Caco-2 (cell line): ENCODE measurements at regions of chr5 and their contacts with region 1.

Region 1: DNA sequence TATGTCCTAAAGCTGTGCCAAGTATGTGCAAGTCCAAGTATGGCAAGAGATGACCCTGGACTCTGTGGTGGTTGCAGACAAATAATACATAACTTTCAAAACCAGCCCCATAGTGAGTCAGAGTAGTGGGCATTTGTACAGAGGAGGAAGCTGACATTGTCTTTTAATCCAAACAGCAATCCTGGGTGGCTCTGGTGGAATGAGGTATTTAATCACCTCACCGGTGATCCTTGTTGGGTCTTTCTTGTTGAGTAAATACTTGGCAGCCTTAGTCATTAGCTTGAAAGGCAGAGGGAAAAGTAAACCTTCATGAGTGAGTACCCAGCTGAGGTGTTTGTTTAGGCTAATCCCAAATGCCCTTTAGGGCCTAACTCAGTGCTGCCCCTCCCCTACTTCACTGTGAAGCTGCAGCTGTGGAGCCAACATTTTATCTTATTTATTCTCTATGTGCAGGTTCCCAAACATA is 148.7 kb upstream of the SLC12A2 start:
- DNase-seq: peak; percentile 78 to 84
- H3K4me3 ChIP-seq: no peak overlapping the region
- H3K4me3 Mint-ChIP-seq: no peak overlapping the region
- H3K27ac Mint-ChIP-seq: peak overlapping the region; percentile 32
- H3K4me1 ChIP-seq: peaks cover 42% of the 10 kb centered on the region
- H3K4me1 Mint-ChIP-seq: peaks cover 60% of the 10 kb centered on the region
- H3K27me3 ChIP-seq: no peaks in the 10 kb centered on the region
- H3K27me3 Mint-ChIP-seq: no peaks in the 10 kb centered on the region
- CTCF ChIP-seq: peak in 1 of 2 experiments; percentile 43

Region 2: GRCh38 chr5:127885176-127885575 is 49.6 kb before region 1 on chr5:
- CTCF ChIA-PET with region 1: no interaction called
- POLR2A ChIA-PET with region 1: no interaction called
- intact Hi-C with region 1: loop called (anchors 1 kb)
- DNase-seq: peak; percentile 23 to 38
- H3K4me3 ChIP-seq: no peak overlapping the region
- H3K4me3 Mint-ChIP-seq: no peak overlapping the region
- H3K27ac Mint-ChIP-seq: no peak overlapping the region
- H3K4me1 ChIP-seq: peaks cover 19% of the 10 kb centered on the region
- H3K4me1 Mint-ChIP-seq: peaks cover 12% of the 10 kb centered on the region
- H3K27me3 ChIP-seq: no peaks in the 10 kb centered on the region
- H3K27me3 Mint-ChIP-seq: no peaks in the 10 kb centered on the region
- CTCF ChIP-seq: no peak

Region 3: DNA sequence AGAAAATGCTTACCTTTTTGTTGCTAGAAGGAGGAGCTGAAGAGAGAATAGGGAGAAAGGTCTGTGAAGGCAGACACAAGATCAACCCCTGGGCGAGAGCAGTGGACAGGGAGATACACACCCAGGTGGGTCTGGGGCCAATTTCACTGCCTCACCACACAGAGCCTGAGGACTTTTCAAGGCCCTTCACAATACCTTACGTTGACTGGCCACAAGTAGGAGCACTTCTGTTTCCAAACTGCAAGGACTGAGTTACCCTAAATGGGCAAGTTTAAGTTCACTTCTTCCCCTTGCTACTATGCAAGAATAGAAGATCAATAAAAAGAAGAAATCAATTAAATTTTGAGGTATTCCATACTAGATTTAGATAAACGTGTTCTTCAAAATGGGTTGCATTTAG is 25.7 kb before region 1 on chr5:
- CTCF ChIA-PET with region 1: interaction called, 3 read pairs
- POLR2A ChIA-PET with region 1: no interaction called
- intact Hi-C with region 1: loop called (anchors 2 kb)
- DNase-seq: peak; percentile 49 to 51
- H3K4me3 ChIP-seq: no peak overlapping the region
- H3K4me3 Mint-ChIP-seq: no peak overlapping the region
- H3K27ac Mint-ChIP-seq: no peak overlapping the region
- H3K4me1 ChIP-seq: peaks cover 16% of the 10 kb centered on the region; the same call in 1 of the 2 replicates
- H3K4me1 Mint-ChIP-seq: peaks cover 10% of the 10 kb centered on the region
- H3K27me3 ChIP-seq: no peaks in the 10 kb centered on the region
- H3K27me3 Mint-ChIP-seq: no peaks in the 10 kb centered on the region
- CTCF ChIP-seq: peak; percentile 53 to 72

Region 4: DNA sequence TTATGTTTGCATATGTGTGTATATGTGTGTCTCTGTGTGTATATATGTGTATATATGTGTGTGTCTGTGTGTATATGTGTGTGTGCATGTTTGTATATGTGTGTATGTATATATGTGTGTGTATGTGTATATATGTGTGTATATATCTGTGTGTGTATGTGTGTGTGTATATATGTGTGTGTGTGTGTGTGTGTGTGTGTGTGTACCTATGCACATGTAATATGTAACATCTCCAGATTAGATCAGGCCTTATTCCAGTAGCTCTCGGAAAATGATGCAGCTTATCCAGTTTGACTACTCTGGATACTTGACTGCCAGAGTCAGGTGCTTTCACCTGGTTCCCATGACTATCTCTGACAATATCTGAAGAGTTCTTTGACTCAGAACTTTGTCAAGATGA is 15.9 kb before region 1 on chr5:
- CTCF ChIA-PET with region 1: no interaction called
- POLR2A ChIA-PET with region 1: no interaction called
- intact Hi-C with region 1: loop called (anchors 2 kb)
- DNase-seq: no peak
- H3K4me3 ChIP-seq: no peak overlapping the region
- H3K4me3 Mint-ChIP-seq: no peak overlapping the region
- H3K27ac Mint-ChIP-seq: no peak overlapping the region
- H3K4me1 ChIP-seq: peaks cover 25% of the 10 kb centered on the region
- H3K4me1 Mint-ChIP-seq: peaks cover 13% of the 10 kb centered on the region
- H3K27me3 ChIP-seq: no peaks in the 10 kb centered on the region
- H3K27me3 Mint-ChIP-seq: no peaks in the 10 kb centered on the region
- CTCF ChIP-seq: no peak

Region 5: DNA sequence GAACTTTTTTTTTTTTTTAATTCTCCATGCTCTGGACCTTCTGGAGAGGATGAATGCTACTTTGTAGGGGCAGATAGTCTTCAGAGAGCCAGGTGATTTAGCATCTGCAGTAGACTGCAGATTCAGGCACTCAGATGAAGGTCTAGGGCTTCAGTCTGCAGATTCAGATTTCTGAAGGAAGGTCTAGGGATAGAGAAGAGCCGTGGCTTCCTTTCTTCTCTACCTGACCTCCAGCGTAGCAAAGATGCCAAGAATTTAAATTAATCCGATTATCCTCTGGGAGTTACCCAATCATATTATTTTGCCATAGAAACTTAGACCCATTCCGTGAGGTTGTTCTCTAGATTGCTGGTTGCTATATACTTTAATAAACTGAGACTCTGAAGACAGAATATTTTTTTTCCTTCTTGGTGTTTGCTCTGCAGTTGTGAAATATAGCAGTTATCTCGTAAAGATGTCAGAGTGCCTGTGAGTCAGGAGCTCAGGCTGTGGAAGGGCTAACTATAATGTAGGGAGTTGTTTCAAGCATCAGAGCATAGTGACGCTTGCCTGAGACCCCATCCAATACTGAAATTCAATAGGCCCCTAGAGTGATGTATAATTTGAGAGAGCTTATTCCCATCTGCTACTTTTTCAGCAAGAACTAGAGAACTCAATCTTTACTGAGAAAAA is 16.0 kb after region 1 on chr5:
- CTCF ChIA-PET with region 1: no interaction called
- POLR2A ChIA-PET with region 1: no interaction called
- intact Hi-C with region 1: loop called (anchors 1 kb)
- DNase-seq: no peak
- H3K4me3 ChIP-seq: no peak overlapping the region
- H3K4me3 Mint-ChIP-seq: no peak overlapping the region
- H3K27ac Mint-ChIP-seq: no peak overlapping the region
- H3K4me1 ChIP-seq: no peaks in the 10 kb centered on the region
- H3K4me1 Mint-ChIP-seq: peaks cover 6% of the 10 kb centered on the region
- H3K27me3 ChIP-seq: no peaks in the 10 kb centered on the region
- H3K27me3 Mint-ChIP-seq: no peaks in the 10 kb centered on the region
- CTCF ChIP-seq: no peak

Region 6: DNA sequence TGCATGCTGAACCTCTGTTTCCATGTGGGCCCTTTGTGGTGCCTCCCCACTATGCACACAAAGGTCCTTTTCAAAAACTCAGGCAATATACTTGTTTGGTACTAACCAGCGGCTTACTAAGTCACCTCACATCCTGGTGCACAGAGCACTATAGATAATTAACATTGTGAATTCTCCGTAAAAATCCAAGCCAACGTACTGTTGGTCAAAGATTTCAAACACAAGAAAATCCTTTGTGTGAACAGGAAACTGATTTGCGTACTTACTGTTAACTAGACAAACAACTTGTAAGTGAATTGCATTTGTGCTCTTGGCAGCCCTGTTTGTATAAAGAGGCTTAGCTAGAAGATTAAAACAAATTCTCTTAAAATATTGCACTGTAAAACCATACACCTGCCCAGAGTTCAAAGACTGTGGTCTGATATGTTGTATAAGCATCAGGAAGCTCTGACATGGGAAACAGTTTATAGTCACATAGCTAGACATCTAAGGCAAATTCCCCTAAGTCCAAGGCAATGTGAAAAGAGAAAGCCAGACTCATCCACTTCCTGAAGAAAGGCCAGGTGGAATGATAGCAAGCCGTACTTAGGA is 23.7 kb after region 1 on chr5:
- CTCF ChIA-PET with region 1: interaction called, 5 read pairs
- POLR2A ChIA-PET with region 1: no interaction called
- intact Hi-C with region 1: loop called (anchors 1 kb)
- DNase-seq: peak; percentile 55 to 58
- H3K4me3 ChIP-seq: no peak overlapping the region
- H3K4me3 Mint-ChIP-seq: peak overlapping the region; percentile 37
- H3K27ac Mint-ChIP-seq: peak overlapping the region; percentile 65
- H3K4me1 ChIP-seq: peaks cover 19% of the 10 kb centered on the region
- H3K4me1 Mint-ChIP-seq: peaks cover 39% of the 10 kb centered on the region
- H3K27me3 ChIP-seq: no peaks in the 10 kb centered on the region
- H3K27me3 Mint-ChIP-seq: no peaks in the 10 kb centered on the region
- CTCF ChIP-seq: no peak